ENCODE measurements at regions of chr16 and their contacts with region 1.

Region 1: GRCh38 chr16:69796351-69797118 is 34.4 kb downstream of the WWP2 start:
- DNase-seq: peak; percentile 66
- H3K4me3 ChIP-seq: peak overlapping the region in 1 of 2 experiments; percentile 14; a peak in 1 of 4 replicates
- H3K27ac ChIP-seq: no peak overlapping the region
- H3K4me1 ChIP-seq: no peaks in the 10 kb centered on the region
- H3K27me3 ChIP-seq: no peaks in the 10 kb centered on the region
- CTCF ChIP-seq: peak; percentile 92
- EP300 ChIP-seq: no peak
- RAD21 ChIP-seq: peak; percentile 96

Region 2: GRCh38 chr16:69669577-69669976 is 127.0 kb before region 1 on chr16:
- CTCF ChIA-PET with region 1: no interaction called
- POLR2A ChIA-PET with region 1: no interaction called
- DNase-seq: no peak
- H3K4me3 ChIP-seq: no peak overlapping the region
- H3K27ac ChIP-seq: no peak overlapping the region
- H3K4me1 ChIP-seq: no peaks in the 10 kb centered on the region
- H3K27me3 ChIP-seq: no peaks in the 10 kb centered on the region
- CTCF ChIP-seq: no peak
- EP300 ChIP-seq: no peak
- RAD21 ChIP-seq: no peak

Region 3: DNA sequence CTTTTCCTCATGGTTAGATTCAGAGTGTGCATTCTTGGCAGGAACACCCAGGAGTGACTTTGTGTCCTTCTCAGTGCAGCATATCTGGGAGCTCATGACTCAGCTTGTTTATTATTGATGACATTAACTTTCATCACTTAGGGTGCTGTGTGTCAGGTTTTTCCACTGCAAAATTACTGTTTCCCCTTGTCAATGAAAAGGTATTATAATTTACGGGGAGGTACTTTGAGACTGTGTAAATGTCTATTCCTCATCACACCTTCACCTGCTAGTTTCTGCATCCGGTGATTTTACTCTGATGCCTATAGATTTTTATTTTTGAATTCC is 16.1 kb after region 1 on chr16:
- CTCF ChIA-PET with region 1: interaction called, 17 read pairs
- POLR2A ChIA-PET with region 1: no interaction called
- DNase-seq: no peak
- H3K4me3 ChIP-seq: no peak overlapping the region
- H3K27ac ChIP-seq: no peak overlapping the region
- H3K4me1 ChIP-seq: no peaks in the 10 kb centered on the region
- H3K27me3 ChIP-seq: no peaks in the 10 kb centered on the region
- CTCF ChIP-seq: no peak
- EP300 ChIP-seq: no peak
- RAD21 ChIP-seq: no peak

Region 4: DNA sequence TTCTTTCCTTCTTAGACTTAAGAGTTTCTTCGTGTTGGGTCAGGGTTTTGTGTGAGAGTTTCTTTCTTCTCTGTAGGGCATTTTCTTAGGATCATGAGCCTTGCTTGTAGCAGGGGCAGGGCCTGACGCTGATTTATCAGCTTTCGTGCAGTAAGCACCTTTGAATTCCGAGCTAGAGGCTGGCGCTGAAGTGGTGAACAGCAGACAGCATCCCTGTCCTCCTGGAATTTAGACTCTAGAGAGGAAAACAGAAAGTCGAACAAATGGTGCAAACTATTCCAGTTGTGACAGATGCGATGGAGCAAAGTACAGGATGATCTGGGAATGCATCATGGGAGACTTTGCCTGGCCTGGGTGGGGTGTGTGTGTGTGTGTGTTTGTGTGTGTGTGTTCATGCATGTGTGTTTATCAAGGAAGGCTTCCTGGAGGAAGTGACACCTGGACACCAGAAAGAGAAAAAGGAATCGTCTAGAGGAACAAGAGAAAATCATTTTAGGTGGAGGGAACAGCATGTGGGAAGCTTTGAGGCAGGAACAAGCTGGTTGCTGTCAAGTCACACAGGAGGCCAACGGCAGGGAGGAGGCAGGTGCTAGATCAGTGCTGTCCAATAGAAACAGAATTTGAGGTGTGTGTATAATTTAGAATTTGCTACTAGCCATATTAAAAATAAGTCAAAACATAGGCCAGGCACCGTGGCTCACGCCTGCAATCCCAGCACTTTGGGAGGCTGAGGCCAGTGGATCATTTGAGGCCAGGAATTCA is 25.8 kb after region 1 on chr16:
- CTCF ChIA-PET with region 1: interaction called, 15 read pairs
- POLR2A ChIA-PET with region 1: no interaction called
- DNase-seq: no peak
- H3K4me3 ChIP-seq: no peak overlapping the region
- H3K27ac ChIP-seq: no peak overlapping the region
- H3K4me1 ChIP-seq: peaks cover 7 to 19% of the 10 kb centered on the region in 2 experiments; a peak in 3 of 4 replicates
- H3K27me3 ChIP-seq: no peaks in the 10 kb centered on the region
- CTCF ChIP-seq: no peak
- EP300 ChIP-seq: no peak
- RAD21 ChIP-seq: no peak

Region 5: DNA sequence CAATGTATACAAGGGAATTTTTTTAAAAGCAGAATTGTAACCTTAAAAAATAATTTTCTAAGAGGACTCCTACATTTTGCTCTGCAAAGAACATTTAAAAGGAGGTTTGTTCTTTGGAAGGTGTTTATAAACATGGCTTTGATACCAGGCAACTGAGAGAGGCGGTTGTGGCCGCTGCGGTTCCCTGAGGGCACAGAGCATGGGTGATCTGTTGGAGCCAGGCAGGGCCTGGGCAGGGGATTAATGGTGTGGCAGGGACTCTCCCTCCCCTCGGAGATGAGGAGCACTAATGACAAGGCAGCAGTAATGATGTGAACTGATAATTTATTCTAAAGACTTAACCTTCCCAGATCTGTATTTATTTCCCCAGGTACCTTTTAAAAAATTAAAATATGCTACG is 31.0 kb after region 1 on chr16:
- CTCF ChIA-PET with region 1: interaction called, 15 read pairs
- POLR2A ChIA-PET with region 1: no interaction called
- DNase-seq: peak; percentile 76
- H3K4me3 ChIP-seq: no peak overlapping the region
- H3K27ac ChIP-seq: 0 out of 4 replicates have a peak overlapping the region, but pooled peaks of 1 of the 2 experiments have one; percentile 23
- H3K4me1 ChIP-seq: peaks cover 4 to 26% of the 10 kb centered on the region in 2 experiments; a peak in 1 of 4 replicates
- H3K27me3 ChIP-seq: no peaks in the 10 kb centered on the region
- CTCF ChIP-seq: no peak
- EP300 ChIP-seq: peak in 1 of 2 experiments; percentile 54; a peak in 2 of 4 replicates
- RAD21 ChIP-seq: no peak; the same call in 1 of the 2 replicates

Region 6: DNA sequence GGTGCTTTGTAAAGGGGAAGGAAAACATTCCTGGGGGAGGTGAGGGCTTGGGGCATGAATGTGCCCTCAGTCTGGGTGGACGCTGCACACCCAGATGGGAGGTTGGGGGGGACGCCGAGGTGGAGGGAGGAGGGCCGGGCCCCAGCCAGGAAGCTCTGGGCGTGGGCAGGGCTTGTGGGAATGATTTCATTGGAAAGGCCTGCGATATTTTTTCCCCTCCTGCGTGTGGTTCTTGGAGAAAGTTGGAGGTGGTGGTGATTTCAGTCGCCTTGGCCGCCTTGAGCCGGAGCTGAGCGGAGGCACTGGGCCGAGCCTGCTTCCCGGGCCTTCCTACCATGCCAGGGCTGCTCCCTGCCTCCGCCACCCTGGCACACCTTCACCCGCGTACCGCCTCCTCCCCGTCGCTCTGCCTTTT is 128.2 kb after region 1 on chr16:
- CTCF ChIA-PET with region 1: interaction called, 117 read pairs
- POLR2A ChIA-PET with region 1: no interaction called
- DNase-seq: no peak
- H3K4me3 ChIP-seq: no peak overlapping the region
- H3K27ac ChIP-seq: no peak overlapping the region
- H3K4me1 ChIP-seq: no peaks in the 10 kb centered on the region; a peak in 1 of 4 replicates
- H3K27me3 ChIP-seq: no peaks in the 10 kb centered on the region
- CTCF ChIP-seq: no peak
- EP300 ChIP-seq: no peak
- RAD21 ChIP-seq: no peak

Region 7: DNA sequence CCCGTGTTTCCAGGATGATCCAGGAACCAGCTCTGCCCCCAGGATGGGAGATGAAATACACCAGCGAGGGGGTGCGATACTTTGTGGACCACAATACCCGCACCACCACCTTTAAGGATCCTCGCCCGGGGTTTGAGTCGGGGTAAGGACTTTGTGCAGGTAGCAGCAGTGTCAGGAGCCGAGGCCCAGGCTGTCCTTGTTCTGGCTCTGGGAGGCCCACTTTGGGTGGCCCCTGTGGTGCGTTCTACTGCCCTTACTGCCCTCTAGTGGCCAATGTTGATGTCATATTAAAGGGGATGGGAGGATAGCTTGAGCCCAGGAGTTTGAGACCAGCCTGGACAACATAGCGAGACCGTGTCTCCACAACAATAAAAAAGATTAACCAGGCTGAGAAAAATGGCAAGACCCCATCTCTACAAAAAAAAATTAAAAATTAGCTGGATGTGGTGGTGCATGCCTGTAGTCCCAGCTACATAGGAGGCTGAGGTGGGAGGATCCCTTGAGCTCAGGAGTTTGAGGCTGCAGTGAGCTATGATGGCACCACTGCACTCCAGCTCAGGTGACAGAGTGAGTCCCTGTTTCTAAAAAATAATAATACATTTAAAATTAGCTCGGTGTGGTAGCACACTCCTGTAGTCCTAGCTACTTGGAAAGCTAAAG is 133.7 kb after region 1 on chr16:
- CTCF ChIA-PET with region 1: interaction called, 117 read pairs
- POLR2A ChIA-PET with region 1: no interaction called
- DNase-seq: peak; percentile 85
- H3K4me3 ChIP-seq: no peak overlapping the region
- H3K27ac ChIP-seq: no peak overlapping the region
- H3K4me1 ChIP-seq: no peaks in the 10 kb centered on the region; a peak in 1 of 4 replicates
- H3K27me3 ChIP-seq: no peaks in the 10 kb centered on the region
- CTCF ChIP-seq: peak; percentile 87
- EP300 ChIP-seq: no peak
- RAD21 ChIP-seq: peak; percentile 75

Region 8: GRCh38 chr16:69937465-69937951 is 141.0 kb after region 1 on chr16:
- CTCF ChIA-PET with region 1: interaction called, 65 read pairs
- POLR2A ChIA-PET with region 1: no interaction called
- DNase-seq: peak; percentile 65
- H3K4me3 ChIP-seq: no peak overlapping the region
- H3K27ac ChIP-seq: no peak overlapping the region
- H3K4me1 ChIP-seq: peaks cover 0 to 5% of the 10 kb centered on the region in 2 experiments; a peak in 1 of 4 replicates
- H3K27me3 ChIP-seq: no peaks in the 10 kb centered on the region
- CTCF ChIP-seq: peak; percentile 40
- EP300 ChIP-seq: no peak
- RAD21 ChIP-seq: peak; percentile 70

Measured in SK-N-SH (cell line).